PC-3 (cell line): ENCODE measurements at regions of chr7 and their contacts with region 1.

Region 1: GRCh38 chr7:155896531-155897263 is 84.4 kb upstream of the SHH start:
- DNase-seq: peak; percentile 88
- ATAC-seq: peak; percentile 95
- H3K4me3 ChIP-seq: 0 out of 2 replicates have a peak overlapping the region, but pooled peaks have one; percentile 12
- H3K27ac ChIP-seq: peak overlapping the region; percentile 19; the same call in 1 of the 2 replicates
- H3K4me1 ChIP-seq: peaks cover 23% of the 10 kb centered on the region
- H3K27me3 ChIP-seq: no peaks in the 10 kb centered on the region
- CTCF ChIP-seq: no peak

Region 2: GRCh38 chr7:155850729-155851678 is 45.7 kb before region 1 on chr7:
- CTCF ChIA-PET with region 1: no interaction called
- POLR2A ChIA-PET with region 1: no interaction called
- intact Hi-C with region 1: no loop called
- DNase-seq: no peak
- ATAC-seq: no peak
- H3K4me3 ChIP-seq: no peak overlapping the region
- H3K27ac ChIP-seq: no peak overlapping the region
- H3K4me1 ChIP-seq: no peaks in the 10 kb centered on the region
- H3K27me3 ChIP-seq: no peaks in the 10 kb centered on the region
- CTCF ChIP-seq: no peak

Region 3: GRCh38 chr7:155862516-155863229 is 34.0 kb before region 1 on chr7:
- CTCF ChIA-PET with region 1: no interaction called
- POLR2A ChIA-PET with region 1: no interaction called
- intact Hi-C with region 1: no loop called
- DNase-seq: no peak
- ATAC-seq: peak; percentile 13
- H3K4me3 ChIP-seq: no peak overlapping the region
- H3K27ac ChIP-seq: peak overlapping the region; percentile 38
- H3K4me1 ChIP-seq: peaks cover 42% of the 10 kb centered on the region
- H3K27me3 ChIP-seq: no peaks in the 10 kb centered on the region
- CTCF ChIP-seq: peak; percentile 71

Region 4: GRCh38 chr7:155885167-155886155 is 11.2 kb before region 1 on chr7:
- CTCF ChIA-PET with region 1: no interaction called
- POLR2A ChIA-PET with region 1: no interaction called
- intact Hi-C with region 1: no loop called
- DNase-seq: peak; percentile 79
- ATAC-seq: peak; percentile 95
- H3K4me3 ChIP-seq: peak overlapping the region; percentile 32; the same call in 1 of the 2 replicates
- H3K27ac ChIP-seq: peak overlapping the region; percentile 78
- H3K4me1 ChIP-seq: peaks cover 36% of the 10 kb centered on the region
- H3K27me3 ChIP-seq: no peaks in the 10 kb centered on the region
- CTCF ChIP-seq: no peak

Region 5: DNA sequence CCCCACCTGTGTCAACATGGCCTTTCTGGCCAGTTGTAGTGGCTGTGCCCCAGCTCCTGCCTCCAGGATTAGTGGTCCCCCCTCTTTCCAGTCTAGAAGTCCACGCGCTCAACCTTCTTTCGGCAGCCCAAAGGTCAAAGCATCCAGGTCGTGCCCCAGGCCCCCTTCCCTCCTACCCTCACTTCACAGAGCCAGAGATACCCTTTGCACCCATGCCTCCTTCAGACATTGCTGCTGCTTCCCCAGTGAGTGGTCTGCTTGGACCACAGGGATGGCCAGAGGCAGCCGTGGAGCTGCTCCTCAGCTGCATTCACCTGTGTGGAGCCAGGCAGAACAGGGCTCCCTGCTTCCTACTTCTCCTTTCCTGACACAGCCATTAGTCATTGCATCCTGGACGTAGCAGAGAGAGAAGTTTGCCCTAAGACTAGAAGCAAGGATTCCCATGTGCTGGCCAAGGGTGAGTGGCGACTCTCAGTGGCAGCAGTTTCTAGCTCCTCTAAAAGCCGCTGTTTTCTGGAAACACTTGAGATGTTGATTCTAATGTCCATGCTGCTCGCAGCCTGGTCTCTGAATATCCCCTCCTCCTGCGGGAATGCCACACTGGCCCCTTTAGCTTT is 158.6 kb after region 1 on chr7:
- CTCF ChIA-PET with region 1: no interaction called
- POLR2A ChIA-PET with region 1: no interaction called
- intact Hi-C with region 1: loop called (anchors 1 kb)
- DNase-seq: peak; percentile 78
- ATAC-seq: peak; percentile 99
- H3K4me3 ChIP-seq: no peak overlapping the region
- H3K27ac ChIP-seq: no peak overlapping the region
- H3K4me1 ChIP-seq: peaks cover 10% of the 10 kb centered on the region
- H3K27me3 ChIP-seq: no peaks in the 10 kb centered on the region
- CTCF ChIP-seq: peak; percentile 51

Region 6: GRCh38 chr7:156614434-156615264 is 718.0 kb after region 1 on chr7:
- CTCF ChIA-PET with region 1: no interaction called
- POLR2A ChIA-PET with region 1: interaction called, 10 read pairs
- intact Hi-C with region 1: no loop called
- DNase-seq: no peak
- ATAC-seq: peak; percentile 53
- H3K4me3 ChIP-seq: no peak overlapping the region
- H3K27ac ChIP-seq: no peak overlapping the region
- H3K4me1 ChIP-seq: no peaks in the 10 kb centered on the region
- H3K27me3 ChIP-seq: peaks cover 11% of the 10 kb centered on the region
- CTCF ChIP-seq: no peak